ENCODE measurements at regions of chr1 and their contacts with region 1.

Region 1: GRCh38 chr1:42816585-42817434 is at the starts of genes ERMAP and SVBP:
- DNase-seq: peak; percentile 95 to 99
- ATAC-seq: peak; percentile 99
- H3K4me3 ChIP-seq: peak within 1 kb of the TSS; percentile 83 to 98
- H3K27ac ChIP-seq: peak within 1 kb of the TSS in 1 of 2 donors; percentile 96
- H3K4me1 ChIP-seq: peaks cover 0 to 4% of the 10 kb centered on the region in 2 donors
- H3K27me3 ChIP-seq: no peaks in the 10 kb centered on the region
- total RNA-seq, gene ERMAP: 7.1 to 12.8 TPM
- total RNA-seq, gene SVBP: 15.9 to 17.3 TPM

Region 2: GRCh38 chr1:42613803-42614131 is 203.0 kb before region 1 on chr1:
- intact Hi-C with region 1: no loop called
- DNase-seq: no peak
- ATAC-seq: no peak
- H3K4me3 ChIP-seq: no peak overlapping the region
- H3K27ac ChIP-seq: no peak overlapping the region
- H3K4me1 ChIP-seq: no peaks in the 10 kb centered on the region
- H3K27me3 ChIP-seq: no peaks in the 10 kb centered on the region

Region 3: GRCh38 chr1:42766741-42767509 is 49.9 kb before region 1 on chr1 and contains the starts of genes C1orf50 and P3H1:
- intact Hi-C with region 1: loop called in 1 of 2 experiments (anchors 5 kb)
- DNase-seq: peak; percentile 100
- ATAC-seq: peak; percentile 98
- H3K4me3 ChIP-seq: peak within 1 kb of the TSS; percentile 86 to 90
- H3K27ac ChIP-seq: peak within 1 kb of the TSS; percentile 24 to 61
- H3K4me1 ChIP-seq: peaks cover 0 to 4% of the 10 kb centered on the region in 2 donors
- H3K27me3 ChIP-seq: no peaks in the 10 kb centered on the region
- total RNA-seq, gene C1orf50: 3.6 to 8.5 TPM
- total RNA-seq, gene P3H1: 37.7 to 54.6 TPM

Region 4: GRCh38 chr1:42973304-42973703 is 156.5 kb after region 1 on chr1:
- intact Hi-C with region 1: no loop called
- DNase-seq: no peak
- ATAC-seq: peak; percentile 22
- H3K4me3 ChIP-seq: no peak overlapping the region
- H3K27ac ChIP-seq: no peak overlapping the region
- H3K4me1 ChIP-seq: no peaks in the 10 kb centered on the region
- H3K27me3 ChIP-seq: no peaks in the 10 kb centered on the region

Region 5: GRCh38 chr1:43082740-43083139 is 265.9 kb after region 1 on chr1:
- intact Hi-C with region 1: no loop called
- DNase-seq: no peak
- ATAC-seq: no peak
- H3K4me3 ChIP-seq: no peak overlapping the region
- H3K27ac ChIP-seq: no peak overlapping the region
- H3K4me1 ChIP-seq: no peaks in the 10 kb centered on the region
- H3K27me3 ChIP-seq: no peaks in the 10 kb centered on the region

Measured in aorta (tissue), 5 donors.